GM12878 (cell line): ENCODE measurements at regions of chr12 and their contacts with region 1.

Region 1: GRCh38 chr12:51047655-51048540 is at the start of gene LETMD1:
- DNase-seq: peak; percentile 98
- ATAC-seq: peak; percentile 98
- H3K4me3 ChIP-seq: peak within 1 kb of the TSS; percentile 94
- H3K27ac ChIP-seq: peak within 1 kb of the TSS; percentile 96
- H3K4me1 ChIP-seq: peaks cover 6% of the 10 kb centered on the region
- H3K27me3 ChIP-seq: no peaks in the 10 kb centered on the region
- CTCF ChIP-seq: peak; percentile 92 to 97 (median 94)
- EP300 ChIP-seq: no peak
- POLR2A ChIP-seq: peak; percentile 95
- RAD21 ChIP-seq: peak; percentile 82
- polyA plus RNA-seq, gene LETMD1: 36.5 to 37.1 TPM

Region 2: DNA sequence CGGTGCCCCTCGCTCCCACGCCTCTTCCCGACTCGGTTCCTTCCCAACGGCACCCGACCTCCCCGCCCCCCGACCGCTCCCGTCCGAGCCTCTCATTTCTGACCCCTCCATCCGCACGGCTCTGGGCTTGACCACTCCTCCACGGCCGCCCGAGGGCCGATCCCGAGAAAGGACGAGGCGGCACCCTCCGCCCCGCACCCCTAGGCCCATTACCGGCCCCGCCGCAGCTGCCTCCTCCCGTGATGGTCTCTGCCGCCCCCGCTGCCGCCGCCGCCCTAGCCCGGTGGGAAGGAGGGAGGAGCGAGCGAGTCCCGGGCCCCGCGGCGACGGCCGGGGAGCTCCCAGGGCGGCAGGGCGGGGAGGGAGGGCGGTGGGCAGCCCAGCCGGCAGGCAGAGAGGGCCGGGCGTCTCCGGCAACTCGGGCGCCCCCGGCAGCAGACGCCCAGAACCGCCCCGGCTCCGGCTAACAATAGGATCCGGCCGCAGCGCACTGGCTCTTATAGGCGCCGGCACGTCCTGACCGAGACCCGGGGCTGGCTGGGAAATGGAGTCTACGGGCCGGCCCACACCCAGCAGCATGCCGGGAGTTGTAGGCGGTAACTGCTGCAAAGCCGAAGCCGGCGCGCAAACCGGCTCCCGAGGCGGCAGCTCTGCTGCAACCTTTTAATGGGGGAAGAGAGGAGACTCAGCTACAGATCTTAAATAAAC is 35.4 kb after region 1 on chr12 and contains the start of gene CSRNP2:
- CTCF ChIA-PET with region 1: interaction called, 5 read pairs
- POLR2A ChIA-PET with region 1: interaction called, 3 read pairs
- RAD21 ChIA-PET with region 1: interaction called, 3 read pairs
- SMC1A ChIA-PET with region 1: interaction called, 4 read pairs
- in situ Hi-C with region 1: no loop called
- intact Hi-C with region 1: loop called (anchors 2 kb)
- DNase-seq: peak; percentile 59
- ATAC-seq: peak; percentile 99
- H3K4me3 ChIP-seq: peak within 1 kb of the TSS; percentile 83
- H3K27ac ChIP-seq: peak within 1 kb of the TSS; percentile 18; the same call in 1 of the 2 replicates
- H3K4me1 ChIP-seq: peaks cover 5% of the 10 kb centered on the region; the same call in 1 of the 2 replicates
- H3K27me3 ChIP-seq: no peaks in the 10 kb centered on the region
- CTCF ChIP-seq: peak in 1 of 3 experiments; percentile 26; a peak in 2 of 6 replicates
- EP300 ChIP-seq: no peak
- POLR2A ChIP-seq: peak; percentile 100
- RAD21 ChIP-seq: no peak
- polyA plus RNA-seq, gene CSRNP2: 1.2 to 1.4 TPM

Region 3: GRCh38 chr12:51217968-51218606 is 170.2 kb after region 1 on chr12 and contains the start of gene POU6F1:
- CTCF ChIA-PET with region 1: interaction called, 10 read pairs
- POLR2A ChIA-PET with region 1: interaction called, 4 read pairs
- RAD21 ChIA-PET with region 1: no interaction called
- SMC1A ChIA-PET with region 1: no interaction called
- in situ Hi-C with region 1: no loop called
- intact Hi-C with region 1: no loop called
- DNase-seq: peak; percentile 25
- ATAC-seq: peak; percentile 90
- H3K4me3 ChIP-seq: peak within 1 kb of the TSS; percentile 77
- H3K27ac ChIP-seq: peak within 1 kb of the TSS; percentile 62
- H3K4me1 ChIP-seq: peaks cover 4% of the 10 kb centered on the region; the same call in 1 of the 2 replicates
- H3K27me3 ChIP-seq: no peaks in the 10 kb centered on the region
- CTCF ChIP-seq: peak; percentile 43 to 73 (median 44); a peak in 5 of 6 replicates
- EP300 ChIP-seq: no peak
- POLR2A ChIP-seq: peak; percentile 75
- RAD21 ChIP-seq: peak; percentile 30; the same call in 1 of the 2 replicates
- polyA plus RNA-seq, gene POU6F1: 0.26 to 0.31 TPM

Region 4: DNA sequence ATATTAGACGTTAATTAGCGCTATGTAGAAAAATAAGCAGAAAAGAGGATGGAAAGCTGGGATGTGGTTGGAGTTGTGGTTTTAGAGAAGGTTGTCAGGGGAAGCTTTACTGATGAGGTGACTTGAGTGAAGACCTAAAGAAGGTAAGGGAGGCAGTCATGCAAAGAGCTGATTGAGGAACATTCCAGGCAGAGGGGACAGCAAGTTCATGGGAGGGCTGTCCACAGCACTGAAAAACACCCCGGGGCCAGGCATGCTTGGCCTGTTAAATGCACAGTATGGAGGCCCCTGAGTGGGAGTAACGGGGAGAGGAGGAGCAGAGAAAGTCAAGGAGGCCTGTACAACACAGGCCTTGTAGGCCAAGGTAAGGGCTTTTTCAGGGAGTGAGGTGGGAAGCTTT is 206.7 kb after region 1 on chr12:
- CTCF ChIA-PET with region 1: interaction called, 15 read pairs
- POLR2A ChIA-PET with region 1: no interaction called
- RAD21 ChIA-PET with region 1: interaction called, 5 read pairs
- SMC1A ChIA-PET with region 1: interaction called, 3 read pairs
- in situ Hi-C with region 1: no loop called
- intact Hi-C with region 1: loop called (anchors 5 kb)
- DNase-seq: no peak
- ATAC-seq: no peak
- H3K4me3 ChIP-seq: no peak overlapping the region
- H3K27ac ChIP-seq: no peak overlapping the region
- H3K4me1 ChIP-seq: no peaks in the 10 kb centered on the region
- H3K27me3 ChIP-seq: no peaks in the 10 kb centered on the region
- CTCF ChIP-seq: no peak
- EP300 ChIP-seq: no peak
- POLR2A ChIP-seq: no peak
- RAD21 ChIP-seq: no peak